ENCODE measurements at regions of chr12 and their contacts with region 1.

Region 1: DNA sequence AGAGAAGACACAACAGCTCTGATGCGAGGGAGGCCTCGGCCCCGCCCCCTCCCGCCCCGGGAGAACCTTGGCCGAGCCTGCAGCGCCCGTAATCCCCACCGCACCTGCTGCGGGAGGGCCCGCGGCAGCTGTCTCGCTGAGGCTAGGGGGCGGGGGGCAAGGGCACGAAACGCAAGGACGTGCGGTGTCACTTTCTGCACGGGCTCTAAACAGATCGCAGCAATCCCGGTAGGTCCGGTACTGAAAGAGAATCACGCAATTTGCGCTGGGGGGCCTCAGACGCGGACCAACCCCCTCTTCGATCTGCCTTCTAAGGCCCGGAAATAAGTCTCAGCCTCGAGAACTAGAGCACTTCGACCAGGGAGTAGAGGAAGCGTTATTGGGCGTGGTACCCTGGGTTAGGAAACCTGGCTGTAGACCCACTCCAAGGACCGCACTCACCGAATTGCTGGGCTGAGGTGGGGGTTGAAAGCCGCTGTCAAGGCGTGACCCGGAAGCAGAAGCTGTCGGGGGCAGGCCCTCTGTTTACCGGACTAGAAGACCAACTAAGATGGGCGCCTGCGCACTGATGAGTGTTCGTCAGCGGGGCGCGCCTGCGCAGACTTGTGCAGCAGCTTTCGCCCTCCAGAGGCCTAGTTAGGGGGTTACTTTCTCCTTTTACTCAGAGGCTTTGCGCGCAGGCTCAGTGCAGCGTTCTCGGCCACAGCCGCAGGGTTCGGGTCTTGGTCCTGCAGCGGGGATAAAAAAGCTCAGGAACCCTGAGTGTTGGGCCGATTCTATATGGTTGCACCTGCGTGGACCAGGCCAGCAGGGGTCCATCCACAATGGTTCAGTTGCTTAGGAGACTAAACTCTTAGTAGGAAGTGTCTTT is at the start of gene ASB8:
- DNase-seq: peak; percentile 99
- ATAC-seq: peak; percentile 96
- H3K4me3 Mint-ChIP-seq: peak within 1 kb of the TSS; percentile 89
- H3K27ac Mint-ChIP-seq: peak within 1 kb of the TSS; percentile 91
- H3K4me1 Mint-ChIP-seq: peaks cover 14% of the 10 kb centered on the region
- H3K27me3 Mint-ChIP-seq: no peaks in the 10 kb centered on the region; the same call in none of the 2 replicates
- CTCF ChIP-seq: no peak
- total RNA-seq, gene ASB8: 7.4 to 11.3 TPM (median 8.8 TPM) in 3 replicates

Region 2: GRCh38 chr12:47904713-47905310 is 252.4 kb before region 1 on chr12 and contains the start of gene VDR:
- CTCF ChIA-PET with region 1: interaction called, 12 read pairs
- POLR2A ChIA-PET with region 1: interaction called, 3 read pairs
- DNase-seq: peak; percentile 83
- ATAC-seq: peak; percentile 86
- H3K4me3 Mint-ChIP-seq: peak within 1 kb of the TSS; percentile 73
- H3K27ac Mint-ChIP-seq: peak within 1 kb of the TSS; percentile 89
- H3K4me1 Mint-ChIP-seq: peaks cover 14% of the 10 kb centered on the region
- H3K27me3 Mint-ChIP-seq: peaks cover 92% of the 10 kb centered on the region
- CTCF ChIP-seq: no peak
- total RNA-seq, gene VDR: 0.76 to 1.3 TPM (median 0.76 TPM) in 3 replicates

Region 3: DNA sequence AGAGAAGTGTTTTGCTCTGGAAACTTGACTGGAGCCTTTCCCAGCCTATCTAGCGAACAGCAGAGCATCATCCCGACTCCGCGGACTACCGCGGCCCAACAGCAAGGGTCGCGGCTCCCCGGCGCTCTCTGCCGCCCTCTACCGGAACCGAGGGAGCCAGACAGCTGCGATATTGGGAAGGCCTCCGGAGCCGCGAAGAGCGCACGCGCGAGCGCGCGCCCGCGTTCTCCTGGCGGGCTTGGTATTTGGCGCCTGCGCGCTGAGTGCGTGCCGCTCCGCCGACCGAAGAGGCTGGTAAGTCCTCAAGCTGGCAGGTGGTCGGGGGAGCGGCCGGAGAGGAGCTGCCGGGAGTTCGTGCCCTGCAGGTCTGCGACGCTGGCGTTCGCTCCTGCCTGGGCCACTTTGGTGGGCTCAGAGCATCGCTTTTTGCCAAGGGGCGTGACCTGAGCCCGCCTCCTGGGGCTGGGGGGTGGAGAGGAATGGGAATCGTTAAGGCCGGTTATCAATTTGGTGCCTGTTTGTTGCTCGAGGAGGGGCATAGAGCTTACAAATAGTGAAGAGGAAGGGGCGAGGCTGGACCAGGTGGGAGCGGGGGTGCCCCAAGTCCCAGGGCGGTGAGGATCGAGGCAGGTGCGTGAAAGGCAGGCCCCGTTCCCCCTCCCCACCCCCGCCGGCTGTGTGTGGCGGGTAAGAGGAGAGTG is 193.8 kb before region 1 on chr12 and contains the start of gene TMEM106C:
- CTCF ChIA-PET with region 1: interaction called, 10 read pairs
- POLR2A ChIA-PET with region 1: no interaction called
- DNase-seq: peak; percentile 95
- ATAC-seq: peak; percentile 93
- H3K4me3 Mint-ChIP-seq: peak within 1 kb of the TSS; percentile 94
- H3K27ac Mint-ChIP-seq: peak within 1 kb of the TSS; percentile 48; the same call in 1 of the 2 replicates
- H3K4me1 Mint-ChIP-seq: peaks cover 45% of the 10 kb centered on the region
- H3K27me3 Mint-ChIP-seq: peaks cover 56% of the 10 kb centered on the region
- CTCF ChIP-seq: peak; percentile 89
- total RNA-seq, gene TMEM106C: 48.3 to 50.8 TPM (median 49.1 TPM) in 3 replicates

Region 4: DNA sequence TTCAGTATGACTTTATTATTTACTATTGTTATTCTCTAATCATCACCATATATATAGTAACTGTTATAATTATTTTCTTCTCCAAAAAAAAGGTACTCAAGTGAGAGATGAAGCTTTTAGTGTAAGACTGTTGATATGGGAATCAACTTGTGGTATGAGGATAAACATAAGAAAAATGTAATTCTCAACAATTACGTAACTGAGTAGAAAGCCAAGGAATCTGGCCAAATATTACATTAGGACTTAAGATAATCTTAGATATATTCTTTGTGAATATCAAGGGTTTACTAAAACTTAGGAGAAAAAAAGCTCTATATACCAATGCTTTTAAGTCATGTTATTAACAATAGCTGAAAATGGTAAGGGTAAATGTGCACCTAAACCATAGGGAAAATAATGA is 64.6 kb before region 1 on chr12:
- CTCF ChIA-PET with region 1: no interaction called
- POLR2A ChIA-PET with region 1: no interaction called
- DNase-seq: no peak
- ATAC-seq: no peak
- H3K4me3 Mint-ChIP-seq: no peak overlapping the region
- H3K27ac Mint-ChIP-seq: no peak overlapping the region
- H3K4me1 Mint-ChIP-seq: no peaks in the 10 kb centered on the region
- H3K27me3 Mint-ChIP-seq: no peaks in the 10 kb centered on the region
- CTCF ChIP-seq: no peak

Region 5: DNA sequence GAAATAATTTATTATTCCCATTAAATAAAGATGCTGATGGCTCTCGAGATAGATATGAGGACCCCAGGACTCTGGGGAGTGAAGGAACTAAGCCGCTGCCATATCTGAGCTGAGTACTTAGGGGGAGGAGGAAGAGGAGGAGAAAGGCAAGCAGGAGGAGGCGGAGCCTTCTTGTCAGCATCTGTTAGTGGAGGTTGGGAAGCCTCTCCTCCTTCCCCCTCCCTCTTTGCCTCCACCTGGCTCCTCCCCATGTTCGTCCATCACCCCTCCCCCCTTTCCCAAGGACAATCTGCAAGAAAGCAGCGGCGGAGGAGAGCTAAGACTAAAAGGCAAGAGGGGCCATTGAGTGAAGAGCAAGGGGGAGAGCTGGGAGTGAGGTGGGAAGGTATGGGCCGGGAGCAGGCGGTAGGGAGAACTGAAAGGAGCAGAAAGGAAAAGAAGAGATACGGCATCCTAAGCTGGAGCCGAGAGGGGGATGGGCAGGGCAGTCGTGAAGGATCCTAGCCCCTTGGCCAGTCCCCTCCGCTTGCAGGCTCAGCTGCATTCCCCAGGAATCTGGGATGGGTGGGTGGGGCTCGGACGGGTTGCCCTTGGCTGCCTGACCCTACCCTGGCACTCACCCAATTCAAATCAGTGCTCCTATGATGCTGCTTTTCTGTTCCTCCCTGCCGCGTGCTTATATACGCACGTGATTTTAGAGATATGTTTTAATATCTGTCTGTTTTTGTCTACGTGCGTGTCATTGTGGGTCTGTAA is 38.0 kb before region 1 on chr12 and contains the start of gene PFKM:
- CTCF ChIA-PET with region 1: interaction called, 16 read pairs
- POLR2A ChIA-PET with region 1: interaction called, 8 read pairs
- DNase-seq: peak; percentile 88
- ATAC-seq: peak; percentile 99
- H3K4me3 Mint-ChIP-seq: peak within 1 kb of the TSS; percentile 92
- H3K27ac Mint-ChIP-seq: peak within 1 kb of the TSS; percentile 82
- H3K4me1 Mint-ChIP-seq: peaks cover 16% of the 10 kb centered on the region
- H3K27me3 Mint-ChIP-seq: peaks cover 13% of the 10 kb centered on the region
- CTCF ChIP-seq: no peak
- total RNA-seq, gene PFKM: 99.3 to 109 TPM (median 108 TPM) in 3 replicates

Region 6: DNA sequence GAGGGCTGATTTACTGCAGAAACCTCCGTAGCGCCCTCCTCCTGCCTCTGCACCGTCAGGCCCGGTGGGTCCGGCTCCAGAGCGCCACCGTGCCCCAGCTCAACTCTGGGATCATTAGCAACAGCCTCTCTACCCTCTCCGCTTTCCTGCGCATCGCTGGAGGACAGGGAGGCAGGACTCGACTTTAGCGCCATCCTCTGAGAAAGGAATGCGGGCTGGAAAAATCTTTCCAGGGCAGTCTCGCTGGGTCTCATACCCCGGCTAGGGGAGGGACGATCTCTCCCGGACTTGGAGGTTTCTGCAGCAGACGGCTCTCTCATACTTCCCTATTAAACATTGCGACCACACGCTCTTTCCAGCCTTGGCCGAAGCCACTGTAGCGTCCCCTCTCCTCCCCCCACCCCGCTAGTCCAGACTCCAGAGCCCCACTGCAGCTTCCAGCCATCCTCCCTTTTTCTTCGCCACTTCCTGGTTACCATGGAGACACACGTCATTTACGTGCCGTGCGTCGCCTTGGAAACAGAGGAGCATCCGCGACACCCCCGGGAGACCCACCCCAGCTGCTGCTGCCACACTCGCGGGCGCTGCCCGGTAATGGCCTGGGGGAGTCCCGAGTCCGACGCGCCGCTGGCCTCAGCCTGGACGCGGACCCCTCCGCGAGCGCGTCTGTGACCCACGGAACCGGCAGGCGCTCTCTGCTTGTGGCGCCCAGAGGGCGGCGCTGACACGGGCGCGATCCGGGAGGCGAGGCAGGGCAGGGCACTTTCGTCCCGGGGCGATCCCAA is 26.0 kb after region 1 on chr12 and contains the start of gene CCDC184:
- CTCF ChIA-PET with region 1: interaction called, 18 read pairs
- POLR2A ChIA-PET with region 1: interaction called, 7 read pairs
- DNase-seq: peak; percentile 74
- ATAC-seq: peak; percentile 85
- H3K4me3 Mint-ChIP-seq: peak within 1 kb of the TSS; percentile 81
- H3K27ac Mint-ChIP-seq: peak within 1 kb of the TSS; percentile 51
- H3K4me1 Mint-ChIP-seq: peaks cover 29% of the 10 kb centered on the region
- H3K27me3 Mint-ChIP-seq: peaks cover 99% of the 10 kb centered on the region
- CTCF ChIP-seq: no peak
- total RNA-seq, gene CCDC184: 1.4 to 1.6 TPM (median 1.5 TPM) in 3 replicates

Region 7: GRCh38 chr12:48197971-48198671 is 40.9 kb after region 1 on chr12:
- CTCF ChIA-PET with region 1: interaction called, 10 read pairs
- POLR2A ChIA-PET with region 1: interaction called, 3 read pairs
- DNase-seq: peak; percentile 97
- ATAC-seq: peak; percentile 96
- H3K4me3 Mint-ChIP-seq: peak overlapping the region; percentile 78
- H3K27ac Mint-ChIP-seq: peak overlapping the region; percentile 97
- H3K4me1 Mint-ChIP-seq: 0 out of 2 replicates have a peak, but pooled peaks cover 7% of the 10 kb centered on the region
- H3K27me3 Mint-ChIP-seq: peaks cover 78% of the 10 kb centered on the region
- CTCF ChIP-seq: no peak

Region 8: DNA sequence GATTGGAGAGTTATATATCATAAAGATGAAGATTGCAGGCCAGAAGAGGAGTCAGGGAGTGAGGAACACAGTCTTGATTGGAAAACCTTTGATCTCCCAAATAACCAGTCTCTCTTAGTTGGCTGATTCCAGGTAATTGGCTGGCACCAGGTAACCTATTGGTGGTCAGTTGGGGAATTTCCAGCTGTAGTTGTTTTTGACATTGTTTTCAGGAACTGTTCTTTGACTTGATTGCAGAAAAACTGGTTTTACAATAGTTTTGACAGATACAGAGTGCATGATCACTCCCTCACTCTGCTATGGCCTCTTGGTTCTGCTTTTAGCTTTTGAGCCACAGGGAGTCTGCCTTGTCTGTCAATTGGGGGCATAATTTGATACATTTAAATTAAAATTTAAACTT is 121.8 kb after region 1 on chr12:
- CTCF ChIA-PET with region 1: no interaction called
- POLR2A ChIA-PET with region 1: no interaction called
- DNase-seq: no peak
- ATAC-seq: no peak
- H3K4me3 Mint-ChIP-seq: no peak overlapping the region
- H3K27ac Mint-ChIP-seq: no peak overlapping the region
- H3K4me1 Mint-ChIP-seq: peaks cover 13% of the 10 kb centered on the region
- H3K27me3 Mint-ChIP-seq: peaks cover 91% of the 10 kb centered on the region
- CTCF ChIP-seq: no peak